GM10248 (cell line): ENCODE measurements at regions of chr4 and their contacts with region 1.

Region 1: GRCh38 chr4:184489771-184490170 is 15.4 kb upstream of the IRF2 start:
- DNase-seq: no peak
- CTCF ChIP-seq: no peak

Region 2: DNA sequence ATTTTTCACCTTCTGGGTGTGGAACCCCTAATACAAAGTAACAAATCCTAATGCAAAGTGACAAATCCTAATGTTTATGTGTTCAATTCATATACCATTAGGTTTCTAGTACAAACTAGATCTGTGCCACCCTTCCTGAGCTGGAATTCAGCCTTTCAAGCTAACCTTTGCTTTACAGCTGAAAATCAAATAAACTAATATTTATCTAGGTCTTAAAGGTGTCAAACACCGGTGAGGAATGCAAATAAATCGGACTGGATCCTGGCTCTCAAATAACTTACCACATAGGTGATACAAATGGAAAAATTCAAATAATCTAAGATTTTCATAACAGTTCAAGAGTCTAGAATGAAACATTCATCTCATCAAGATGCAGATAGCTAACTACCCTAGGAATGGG is 27.0 kb before region 1 on chr4:
- CTCF ChIA-PET with region 1: no interaction called
- POLR2A ChIA-PET with region 1: no interaction called
- DNase-seq: no peak
- CTCF ChIP-seq: no peak

Region 3: GRCh38 chr4:184506527-184507121 is 16.9 kb after region 1 on chr4:
- CTCF ChIA-PET with region 1: interaction called, 19 read pairs
- POLR2A ChIA-PET with region 1: no interaction called
- DNase-seq: peak; percentile 73
- CTCF ChIP-seq: no peak